CD14-positive monocyte (primary cell): ENCODE measurements at regions of chr3 and their contacts with region 1.

Region 1: DNA sequence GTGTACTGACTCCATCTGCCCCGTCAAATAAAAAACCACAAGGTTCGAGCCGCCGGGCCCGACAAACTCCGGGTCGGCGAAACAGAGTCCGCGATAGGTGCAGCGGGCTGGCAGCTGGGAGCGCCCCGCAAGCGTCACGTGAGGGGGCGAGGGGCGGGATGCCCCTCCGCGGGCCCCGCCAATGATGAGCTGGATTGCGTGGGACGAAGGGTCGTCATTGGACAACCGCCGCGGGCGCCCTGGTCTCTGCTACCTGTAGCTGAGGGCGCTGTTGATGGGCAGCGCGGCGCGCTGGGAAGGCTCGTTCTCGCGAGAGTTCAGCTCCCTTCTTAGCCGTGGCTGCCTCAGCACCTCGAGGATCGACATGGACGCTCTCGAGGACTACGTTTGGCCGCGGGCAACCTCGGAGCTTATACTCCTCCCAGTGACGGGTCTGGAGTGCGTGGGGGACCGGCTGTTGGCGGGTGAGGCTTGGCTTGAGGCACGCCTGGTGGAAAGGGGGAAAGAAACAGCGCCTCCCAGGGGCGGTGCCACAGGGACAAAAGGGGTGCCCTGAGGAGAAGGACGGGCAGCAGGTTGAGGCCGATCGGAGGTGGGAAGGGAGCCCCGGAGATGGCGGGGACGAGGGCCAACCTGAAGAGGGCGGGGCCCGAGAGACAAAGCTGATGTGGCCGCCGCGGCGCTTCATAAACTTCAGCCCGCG is at the start of gene WDR6:
- DNase-seq: peak; percentile 94 to 97 (median 95)
- H3K4me3 ChIP-seq: peak within 1 kb of the TSS; percentile 57 to 94 (median 93)
- H3K4me3 Mint-ChIP-seq: peak within 1 kb of the TSS; percentile 95 to 98
- H3K27ac ChIP-seq: peak within 1 kb of the TSS; percentile 90 to 97
- H3K27ac Mint-ChIP-seq: peak within 1 kb of the TSS; percentile 94 to 99 (median 99)
- H3K4me1 ChIP-seq: peaks cover 20 to 34% of the 10 kb centered on the region in 2 donors
- H3K4me1 Mint-ChIP-seq: peaks cover 23% of the 10 kb centered on the region
- H3K27me3 ChIP-seq: no peaks in the 10 kb centered on the region
- H3K27me3 Mint-ChIP-seq: peaks cover 0 to 2% (median 1%) of the 10 kb centered on the region in 3 donors
- CTCF ChIP-seq: peak; percentile 45
- polyA plus RNA-seq, gene WDR6: 30.6 to 103 (median 46.3) TPM

Region 2: DNA sequence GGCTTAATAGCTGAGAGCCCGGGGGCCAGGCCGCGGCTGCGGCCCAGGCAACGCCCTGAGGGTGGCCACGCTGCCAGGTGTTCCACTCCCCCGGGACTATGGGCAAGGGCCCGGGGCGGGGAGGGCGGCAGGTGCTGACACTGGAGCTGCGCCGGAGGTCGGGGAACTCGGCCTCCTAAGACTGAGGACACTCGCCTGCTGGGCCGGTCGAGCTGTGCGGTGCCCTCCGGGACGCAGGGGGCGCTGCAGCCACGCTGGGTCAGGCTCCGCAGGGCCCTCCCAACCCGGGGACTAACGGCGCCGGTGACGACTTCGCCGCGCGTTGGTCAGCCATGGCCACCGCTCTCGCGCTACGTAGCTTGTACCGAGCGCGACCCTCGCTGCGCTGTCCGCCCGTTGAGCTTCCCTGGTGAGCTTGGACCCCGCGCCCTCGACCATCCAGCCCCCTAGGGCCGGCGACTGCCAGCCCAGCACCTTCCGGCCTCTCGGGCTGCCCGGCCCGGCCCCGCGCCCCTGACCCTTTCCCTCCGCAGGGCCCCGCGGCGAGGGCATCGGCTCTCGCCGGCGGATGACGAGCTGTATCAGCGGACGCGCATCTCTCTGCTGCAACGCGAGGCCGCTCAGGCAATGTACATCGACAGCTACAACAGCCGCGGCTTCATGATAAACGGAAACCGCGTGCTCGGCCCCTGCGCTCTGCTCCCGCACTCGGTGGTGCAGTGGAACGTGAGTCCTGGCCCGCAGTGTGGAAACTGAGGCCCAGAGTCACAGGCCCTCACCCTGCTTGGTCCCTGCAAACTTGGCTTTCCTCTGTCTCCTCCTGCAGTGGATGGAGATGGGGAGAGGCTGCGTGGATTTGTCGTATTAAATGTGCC is 14.8 kb after region 1 on chr3 and contains the start of gene NDUFAF3:
- intact Hi-C with region 1: loop called in 1 of 2 experiments (anchors 1 kb)
- DNase-seq: peak; percentile 89 to 93 (median 93)
- H3K4me3 ChIP-seq: peak within 1 kb of the TSS; percentile 71 to 90 (median 84)
- H3K4me3 Mint-ChIP-seq: peak within 1 kb of the TSS; percentile 90 to 92
- H3K27ac ChIP-seq: peak within 1 kb of the TSS; percentile 98
- H3K27ac Mint-ChIP-seq: peak within 1 kb of the TSS; percentile 96 to 99 (median 98)
- H3K4me1 ChIP-seq: peaks cover 41 to 49% of the 10 kb centered on the region in 2 donors
- H3K4me1 Mint-ChIP-seq: peaks cover 34% of the 10 kb centered on the region
- H3K27me3 ChIP-seq: no peaks in the 10 kb centered on the region
- H3K27me3 Mint-ChIP-seq: peaks cover 0 to 2% (median 0%) of the 10 kb centered on the region in 3 donors
- CTCF ChIP-seq: peak; percentile 100
- polyA plus RNA-seq, gene NDUFAF3: 42.1 to 93.4 (median 88.8) TPM